ENCODE measurements at regions of chr17 and their contacts with region 1.

Region 1: DNA sequence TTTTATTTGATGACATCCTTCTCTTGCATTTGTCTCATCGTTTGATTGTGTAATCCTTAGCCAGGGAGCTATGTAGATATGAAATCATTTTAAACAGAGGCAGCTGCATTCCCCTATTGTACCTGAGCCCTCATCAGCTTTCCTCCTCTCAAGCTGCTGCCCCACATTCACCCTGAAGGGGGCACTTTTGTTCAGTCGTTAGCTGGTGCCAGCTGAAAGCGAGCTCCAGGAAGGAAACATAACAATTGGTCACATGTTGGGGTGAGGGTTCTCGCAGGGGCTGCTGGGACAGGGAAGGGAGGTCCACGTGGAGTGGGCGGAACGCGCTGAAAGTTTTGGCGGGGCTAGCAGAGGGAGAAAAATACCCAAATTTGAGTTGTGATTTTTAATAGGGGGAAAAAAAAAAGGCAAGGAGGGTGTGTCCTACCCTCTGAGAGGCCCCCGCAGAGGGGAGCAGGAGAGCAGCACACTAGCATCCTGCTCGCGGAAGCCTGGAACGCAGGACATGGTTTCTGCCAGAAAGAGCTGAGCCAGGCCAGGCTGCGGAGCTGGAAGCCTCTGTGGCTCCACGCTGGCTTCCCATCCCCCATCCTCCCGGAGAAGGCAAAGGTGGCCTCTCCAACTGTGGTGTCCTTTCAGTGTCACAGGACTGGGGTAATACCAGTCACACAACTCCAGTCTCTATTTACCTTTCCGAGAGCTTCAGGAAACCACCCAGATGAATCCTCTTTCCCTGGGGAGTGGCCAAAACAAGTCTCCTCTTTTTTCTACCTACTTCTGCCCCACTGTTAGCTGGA is 8.5 kb upstream of the MSL1 start:
- DNase-seq: peak; percentile 95
- H3K4me3 ChIP-seq: peak overlapping the region; percentile 19 to 36
- H3K27ac ChIP-seq: peak overlapping the region; percentile 88 to 97
- H3K4me1 ChIP-seq: peaks cover 36% of the 10 kb centered on the region
- H3K27me3 ChIP-seq: no peaks in the 10 kb centered on the region
- CTCF ChIP-seq: peak; percentile 90 to 100 (median 95)
- POLR2A ChIP-seq: peak; percentile 22

Region 2: DNA sequence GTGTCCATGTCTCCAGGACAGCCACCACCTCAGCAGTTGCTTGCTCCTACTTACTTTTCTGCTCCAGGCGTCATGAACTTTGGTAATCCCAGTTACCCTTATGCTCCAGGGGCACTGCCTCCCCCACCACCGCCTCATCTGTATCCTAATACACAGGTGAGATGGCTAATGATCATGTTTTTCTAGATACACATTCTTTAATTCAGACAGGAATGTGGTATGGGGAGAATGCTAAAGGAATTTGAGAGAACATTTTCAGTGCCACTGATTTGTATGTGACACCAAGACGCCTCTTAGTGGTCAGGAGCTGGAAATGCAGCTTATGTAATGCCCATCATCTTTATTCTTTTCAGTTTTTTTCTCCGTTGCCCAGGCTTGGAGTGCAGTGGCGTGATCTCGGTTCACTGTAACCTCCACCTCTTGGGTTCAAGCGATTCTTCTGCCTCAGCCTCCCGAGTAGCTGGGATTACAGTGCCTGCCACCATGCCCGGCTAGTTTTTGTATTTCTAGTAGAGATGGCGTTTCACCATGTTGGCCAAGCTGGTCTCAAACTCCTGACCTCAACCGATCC is 55.0 kb after region 1 on chr17:
- intact Hi-C with region 1: loop called (anchors 2 kb)
- DNase-seq: peak; percentile 36
- H3K4me3 ChIP-seq: no peak overlapping the region
- H3K27ac ChIP-seq: peak overlapping the region; percentile 42 to 56
- H3K4me1 ChIP-seq: no peaks in the 10 kb centered on the region
- H3K27me3 ChIP-seq: no peaks in the 10 kb centered on the region
- CTCF ChIP-seq: peak; percentile 43 to 95 (median 86)
- POLR2A ChIP-seq: no peak

Measured in prostate gland (tissue), 2 donors.